Heart left ventricle (tissue), 16 donors: ENCODE measurements at regions of chr11 and their contacts with region 1.

Region 1: DNA sequence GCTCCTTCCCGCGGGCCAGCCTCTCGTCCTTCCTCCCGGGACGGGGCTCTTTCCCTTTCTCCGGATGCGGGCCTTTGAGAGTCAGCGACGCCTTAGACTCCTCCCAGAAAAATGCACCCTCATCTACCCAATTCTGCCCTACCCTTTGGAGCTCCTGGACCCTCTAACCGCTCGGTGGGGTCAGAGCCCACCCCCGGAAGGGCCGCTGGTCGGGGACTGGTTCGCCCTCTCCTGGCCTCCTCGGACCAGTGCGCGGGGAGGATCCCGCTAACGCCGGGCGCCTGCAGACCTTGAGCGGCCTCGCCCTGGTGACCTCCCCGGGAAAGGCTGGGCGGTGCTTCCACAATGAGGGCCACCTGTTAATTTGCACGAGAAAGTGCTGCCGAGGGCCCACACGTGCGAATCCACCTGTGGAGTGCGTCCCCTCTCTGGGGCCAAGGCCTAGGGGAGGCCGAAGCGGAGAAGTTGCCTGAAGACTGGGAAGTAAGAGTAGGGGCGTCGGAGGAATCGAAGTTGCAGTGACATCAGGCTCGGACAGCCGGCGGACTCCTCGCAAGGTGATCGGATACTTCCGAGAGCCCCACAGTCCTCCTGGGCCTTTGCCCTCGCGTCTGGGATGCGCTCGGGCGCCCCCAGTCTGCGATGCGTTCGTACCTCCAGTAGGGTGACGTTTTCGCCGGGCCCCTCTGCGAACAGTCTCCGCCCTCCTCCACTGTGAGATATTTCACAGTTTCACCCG is 61.5 kb downstream of the ENDOD1 start:
- DNase-seq: peak; percentile 92 to 94 (median 93)
- ATAC-seq: peak; percentile 90 to 94 (median 92)
- H3K4me3 ChIP-seq: peak overlapping the region; percentile 38 to 92 (median 64)
- H3K27ac ChIP-seq: peak overlapping the region; percentile 80 to 99 (median 92)
- H3K4me1 ChIP-seq: peaks cover 0 to 50% (median 17%) of the 10 kb centered on the region in 12 donors
- H3K27me3 ChIP-seq: no peaks in the 10 kb centered on the region
- CTCF ChIP-seq: peak; percentile 69 to 92 (median 82)
- POLR2A ChIP-seq: peak in 1 of 2 donors; percentile 71

Region 2: GRCh38 chr11:94973099-94973968 is 177.8 kb before region 1 on chr11 and contains the starts of genes CWC15 and KDM4D:
- intact Hi-C with region 1: loop called in 4 of 10 experiments (anchors 5 to 10 kb)
- DNase-seq: peak; percentile 96
- ATAC-seq: peak; percentile 99 to 100 (median 100)
- H3K4me3 ChIP-seq: peak within 1 kb of the TSS; percentile 71 to 93 (median 87)
- H3K27ac ChIP-seq: peak within 1 kb of the TSS in 11 of 12 donors; percentile 57 to 89 (median 80)
- H3K4me1 ChIP-seq: peaks cover 4 to 19% (median 12%) of the 10 kb centered on the region in 12 donors
- H3K27me3 ChIP-seq: no peaks in the 10 kb centered on the region
- CTCF ChIP-seq: peak in 1 of 12 donors; percentile 15
- POLR2A ChIP-seq: no peak
- total RNA-seq, gene CWC15: 54.4 to 81.8 (median 62.6) TPM
- total RNA-seq, gene KDM4D: 0.65 to 1.3 (median 0.95) TPM in 8 of 9 donors, not detected in the other

Region 3: GRCh38 chr11:95089620-95090542 is 61.2 kb before region 1 on chr11 and contains the start of gene ENDOD1:
- intact Hi-C with region 1: loop called in 5 of 10 experiments (anchors 1 to 5 kb)
- DNase-seq: peak; percentile 88 to 94 (median 88)
- ATAC-seq: peak; percentile 94 to 99 (median 97)
- H3K4me3 ChIP-seq: peak within 1 kb of the TSS; percentile 77 to 96 (median 92)
- H3K27ac ChIP-seq: peak within 1 kb of the TSS; percentile 63 to 98 (median 93)
- H3K4me1 ChIP-seq: peaks cover 0 to 40% (median 22%) of the 10 kb centered on the region in 12 donors
- H3K27me3 ChIP-seq: no peaks in the 10 kb centered on the region
- CTCF ChIP-seq: peak in 3 of 12 donors; percentile 10 to 29 (median 10)
- POLR2A ChIP-seq: peak in 1 of 2 donors; percentile 73
- total RNA-seq, gene ENDOD1: 9.7 to 28.5 (median 12.9) TPM

Region 4: DNA sequence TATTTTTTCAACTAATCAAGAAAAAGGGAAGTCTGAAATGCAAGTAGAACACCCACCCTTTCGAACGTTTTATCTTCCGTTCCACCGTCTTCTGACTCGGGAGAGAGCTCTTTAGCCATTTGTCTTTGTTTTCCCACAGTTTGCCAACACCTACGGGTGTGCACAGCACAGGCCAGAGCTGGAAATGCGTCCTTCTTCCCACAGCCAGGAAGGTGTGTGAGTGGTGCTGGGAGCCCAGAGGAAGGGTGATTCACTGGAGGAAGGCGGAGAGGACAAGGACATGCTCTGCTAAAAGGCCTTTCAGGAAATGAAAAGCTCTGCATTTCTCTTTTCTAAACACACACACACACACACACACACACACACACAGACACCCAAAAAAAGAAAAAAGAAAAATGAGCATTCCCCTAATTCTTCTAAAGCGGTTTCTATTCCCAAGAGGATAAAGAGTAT is 42.9 kb before region 1 on chr11:
- intact Hi-C with region 1: loop called in 2 of 10 experiments (anchors 1 to 5 kb)
- DNase-seq: peak in 4 of 5 donors; percentile 40 to 72 (median 65)
- ATAC-seq: peak; percentile 82 to 95 (median 90)
- H3K4me3 ChIP-seq: peak overlapping the region in 2 of 12 donors; percentile 7 to 16
- H3K27ac ChIP-seq: peak overlapping the region; percentile 56 to 88 (median 76)
- H3K4me1 ChIP-seq: peaks cover 0 to 47% (median 25%) of the 10 kb centered on the region in 12 donors
- H3K27me3 ChIP-seq: no peaks in the 10 kb centered on the region
- CTCF ChIP-seq: no peak
- POLR2A ChIP-seq: no peak

Region 5: GRCh38 chr11:95322546-95322945 is 171.4 kb after region 1 on chr11:
- intact Hi-C with region 1: no loop called
- DNase-seq: peak in 1 of 5 donors; percentile 19
- ATAC-seq: peak in 3 of 4 donors; percentile 73 to 87 (median 81)
- H3K4me3 ChIP-seq: no peak overlapping the region
- H3K27ac ChIP-seq: no peak overlapping the region
- H3K4me1 ChIP-seq: peaks cover 0 to 23% (median 5%) of the 10 kb centered on the region in 12 donors
- H3K27me3 ChIP-seq: no peaks in the 10 kb centered on the region
- CTCF ChIP-seq: no peak
- POLR2A ChIP-seq: no peak

Region 6: DNA sequence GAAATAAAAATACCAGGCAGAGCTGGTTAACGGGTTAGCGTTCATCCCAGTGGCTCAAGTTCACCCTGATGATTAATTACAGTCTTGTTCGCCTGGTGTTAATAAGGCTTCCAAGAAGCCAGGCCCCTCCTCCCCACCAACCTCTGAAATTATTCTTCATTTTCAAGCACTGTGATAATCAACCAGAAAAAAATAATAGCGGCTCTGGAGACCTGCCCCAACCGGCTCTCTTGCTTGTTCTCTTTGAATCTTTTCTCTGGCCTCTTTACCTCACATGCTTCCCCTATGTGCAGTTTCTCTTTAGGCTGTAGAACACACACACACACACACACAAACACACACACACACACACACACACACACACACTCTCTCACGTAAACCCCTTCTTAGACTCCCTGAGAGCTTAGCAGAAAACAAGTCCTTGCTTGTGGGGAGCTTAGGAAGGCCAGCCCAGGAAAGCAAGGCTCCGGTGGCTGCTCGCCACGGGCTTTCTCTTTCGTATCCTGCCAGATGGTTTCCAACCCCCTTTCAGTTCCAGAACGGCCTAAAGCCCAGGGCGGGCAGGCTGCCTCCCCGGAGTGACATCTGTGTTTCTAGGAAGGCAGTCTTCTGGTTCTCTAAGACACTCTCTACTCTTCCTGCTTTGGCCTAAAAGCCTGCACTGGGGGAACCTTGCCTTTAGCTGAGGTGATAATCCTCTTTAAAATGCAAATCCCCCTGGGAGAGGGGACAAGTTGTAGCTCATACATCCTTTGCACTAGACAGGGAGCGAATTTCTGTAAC is 186.3 kb after region 1 on chr11:
- intact Hi-C with region 1: loop called in 2 of 10 experiments (anchors 5 to 10 kb)
- DNase-seq: peak; percentile 61 to 78 (median 74)
- ATAC-seq: peak; percentile 45 to 85 (median 69)
- H3K4me3 ChIP-seq: peak overlapping the region in 4 of 12 donors; percentile 1 to 23 (median 12)
- H3K27ac ChIP-seq: peak overlapping the region; percentile 68 to 89 (median 80)
- H3K4me1 ChIP-seq: peaks cover 6 to 41% (median 32%) of the 10 kb centered on the region in 12 donors
- H3K27me3 ChIP-seq: no peaks in the 10 kb centered on the region
- CTCF ChIP-seq: no peak
- POLR2A ChIP-seq: no peak

Region 7: GRCh38 chr11:95705485-95706124 is 554.5 kb after region 1 on chr11:
- intact Hi-C with region 1: loop called (anchors 1 to 5 kb)
- DNase-seq: peak; percentile 82 to 91 (median 87)
- ATAC-seq: peak; percentile 90 to 99 (median 98)
- H3K4me3 ChIP-seq: no peak overlapping the region
- H3K27ac ChIP-seq: peak overlapping the region in 8 of 12 donors; percentile 1 to 47 (median 22)
- H3K4me1 ChIP-seq: peaks cover 0 to 30% (median 8%) of the 10 kb centered on the region in 12 donors
- H3K27me3 ChIP-seq: no peaks in the 10 kb centered on the region
- CTCF ChIP-seq: peak; percentile 88 to 99 (median 93)
- POLR2A ChIP-seq: no peak

Region 8: GRCh38 chr11:96424693-96425092 is 1273.6 kb after region 1 on chr11:
- intact Hi-C with region 1: loop called in 1 of 10 experiments (anchors 10 kb)
- DNase-seq: no peak
- ATAC-seq: no peak
- H3K4me3 ChIP-seq: no peak overlapping the region
- H3K27ac ChIP-seq: no peak overlapping the region
- H3K4me1 ChIP-seq: no peaks in the 10 kb centered on the region
- H3K27me3 ChIP-seq: peaks cover 0 to 21% (median 0%) of the 10 kb centered on the region in 9 donors
- CTCF ChIP-seq: no peak
- POLR2A ChIP-seq: no peak